ENCODE measurements at regions of chrX and their contacts with region 1.

Region 1: GRCh38 chrX:131704136-131704695 is 160.3 kb downstream of the OR13H1 start:
- DNase-seq: peak; percentile 69
- H3K4me3 ChIP-seq: peak overlapping the region; percentile 49 to 55 (median 51)
- H3K27ac ChIP-seq: peak overlapping the region; percentile 12
- H3K4me1 ChIP-seq: no peaks in the 10 kb centered on the region
- H3K27me3 ChIP-seq: no peaks in the 10 kb centered on the region
- CTCF ChIP-seq: peak; percentile 45 to 56

Region 2: GRCh38 chrX:131589032-131589431 is 115.2 kb before region 1 on chrX:
- CTCF ChIA-PET with region 1: no interaction called
- dilution Hi-C with region 1: no loop called
- in situ Hi-C with region 1: no loop called
- intact Hi-C with region 1: no loop called
- DNase-seq: no peak
- H3K4me3 ChIP-seq: no peak overlapping the region
- H3K27ac ChIP-seq: no peak overlapping the region
- H3K4me1 ChIP-seq: no peaks in the 10 kb centered on the region
- H3K27me3 ChIP-seq: peaks cover 3% of the 10 kb centered on the region
- CTCF ChIP-seq: no peak

Region 3: GRCh38 chrX:131728295-131729145 is 24.3 kb after region 1 on chrX:
- CTCF ChIA-PET with region 1: no interaction called
- dilution Hi-C with region 1: no loop called
- in situ Hi-C with region 1: no loop called
- intact Hi-C with region 1: loop called (anchors 1 kb)
- DNase-seq: peak; percentile 78
- H3K4me3 ChIP-seq: peak overlapping the region; percentile 33 to 49 (median 40)
- H3K27ac ChIP-seq: peak overlapping the region; percentile 36
- H3K4me1 ChIP-seq: no peaks in the 10 kb centered on the region
- H3K27me3 ChIP-seq: no peaks in the 10 kb centered on the region
- CTCF ChIP-seq: peak; percentile 33 to 60

Region 4: GRCh38 chrX:131746474-131746968 is 42.3 kb after region 1 on chrX:
- CTCF ChIA-PET with region 1: no interaction called
- dilution Hi-C with region 1: no loop called
- in situ Hi-C with region 1: no loop called
- intact Hi-C with region 1: loop called (anchors 1 kb)
- DNase-seq: peak; percentile 79
- H3K4me3 ChIP-seq: peak overlapping the region; percentile 54 to 66 (median 57)
- H3K27ac ChIP-seq: peak overlapping the region; percentile 57
- H3K4me1 ChIP-seq: no peaks in the 10 kb centered on the region
- H3K27me3 ChIP-seq: no peaks in the 10 kb centered on the region
- CTCF ChIP-seq: peak; percentile 22 to 45

Region 5: GRCh38 chrX:131778269-131779218 is 74.3 kb after region 1 on chrX:
- CTCF ChIA-PET with region 1: no interaction called
- dilution Hi-C with region 1: loop called (anchors 10 kb)
- in situ Hi-C with region 1: no loop called
- intact Hi-C with region 1: loop called (anchors 1 kb)
- DNase-seq: peak; percentile 70
- H3K4me3 ChIP-seq: peak overlapping the region; percentile 36 to 50 (median 49)
- H3K27ac ChIP-seq: peak overlapping the region; percentile 70
- H3K4me1 ChIP-seq: peaks cover 4% of the 10 kb centered on the region
- H3K27me3 ChIP-seq: no peaks in the 10 kb centered on the region
- CTCF ChIP-seq: peak; percentile 21 to 45

Region 6: DNA sequence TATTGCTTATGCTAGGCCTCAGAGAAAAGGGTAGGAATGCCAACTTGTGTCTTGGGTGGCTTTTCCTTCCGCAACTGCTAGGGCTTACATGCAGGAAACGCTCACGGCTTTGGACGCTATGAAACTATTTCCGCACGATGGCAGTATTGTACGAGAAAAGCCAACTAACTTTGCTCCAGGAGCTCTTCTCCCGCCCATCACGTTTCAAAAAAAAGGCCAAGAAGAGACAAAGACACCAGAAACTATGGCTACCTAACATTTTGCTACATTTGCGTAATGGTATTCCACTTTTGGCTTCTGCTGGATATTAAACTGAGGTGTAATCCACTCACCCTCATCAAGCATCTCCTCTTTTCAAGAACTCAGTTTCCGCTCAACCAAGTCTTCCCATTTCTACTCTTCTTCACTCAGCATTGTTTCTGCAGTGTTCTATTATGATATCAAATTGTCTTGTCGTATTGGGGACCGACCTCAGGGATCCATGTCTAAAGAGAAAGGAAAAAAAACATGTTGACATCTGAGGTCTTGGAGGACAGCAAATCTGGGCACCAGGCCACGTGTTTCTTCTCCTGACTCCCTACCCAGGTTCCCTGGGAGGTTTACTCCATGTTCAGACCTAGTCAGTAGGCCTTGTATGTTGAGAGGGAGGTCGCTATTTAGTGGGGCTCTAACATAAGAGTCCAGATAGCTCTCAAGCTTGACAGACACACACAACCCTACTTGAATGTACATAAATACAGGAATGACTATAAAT is 79.5 kb after region 1 on chrX:
- CTCF ChIA-PET with region 1: no interaction called
- dilution Hi-C with region 1: loop called (anchors 10 kb)
- in situ Hi-C with region 1: no loop called
- intact Hi-C with region 1: loop called (anchors 1 kb)
- DNase-seq: peak; percentile 86
- H3K4me3 ChIP-seq: peak overlapping the region in 1 of 3 experiments; percentile 35
- H3K27ac ChIP-seq: peak overlapping the region; percentile 38
- H3K4me1 ChIP-seq: peaks cover 4% of the 10 kb centered on the region
- H3K27me3 ChIP-seq: no peaks in the 10 kb centered on the region
- CTCF ChIP-seq: peak; percentile 50 to 56

Region 7: DNA sequence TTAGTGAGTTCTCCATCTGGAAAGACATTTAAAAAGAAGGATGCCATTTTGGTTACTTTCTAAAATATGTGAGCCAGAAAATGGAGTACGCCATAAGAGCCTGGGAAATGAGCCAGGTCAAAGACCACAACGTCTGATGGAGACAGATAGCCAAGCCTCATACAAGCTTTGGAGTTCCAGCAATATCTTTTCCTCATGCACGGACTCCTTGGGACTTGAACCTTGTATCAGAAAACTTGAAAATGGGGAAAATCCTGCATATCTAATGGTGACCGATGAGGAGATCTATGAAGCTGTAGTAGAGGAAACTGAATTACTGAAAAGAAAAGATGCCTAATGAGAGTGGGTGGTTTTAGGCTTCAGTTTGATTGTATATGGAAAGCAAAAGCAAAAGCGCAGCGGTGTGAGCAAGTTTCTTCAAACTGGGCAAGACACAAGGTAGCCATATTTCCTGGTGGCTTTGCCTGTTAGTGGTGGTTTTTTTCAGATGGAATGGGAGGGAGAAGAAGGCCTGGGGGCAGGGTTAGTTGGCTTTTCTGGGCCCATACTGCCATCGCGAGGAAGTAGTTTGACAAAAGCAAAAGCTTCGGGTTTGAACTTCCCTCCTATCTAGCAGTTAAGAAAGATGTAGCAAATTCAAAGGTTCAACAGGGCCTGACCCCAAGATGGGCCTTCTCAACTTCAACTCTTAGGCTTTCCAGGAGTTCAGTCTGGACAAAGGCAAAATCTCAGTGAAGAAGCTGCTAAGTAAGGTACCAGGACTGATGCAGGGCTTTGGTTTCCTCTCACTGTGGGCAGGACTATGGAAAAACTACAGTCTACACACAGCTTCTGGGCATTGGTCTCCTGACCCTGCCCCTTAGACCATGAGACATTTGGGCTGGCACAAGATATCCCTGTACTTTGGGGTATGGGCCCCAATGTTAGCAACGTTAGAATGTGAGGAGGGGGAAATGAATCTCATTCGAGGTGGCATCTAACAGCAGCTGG is 108.9 kb after region 1 on chrX:
- CTCF ChIA-PET with region 1: no interaction called
- dilution Hi-C with region 1: no loop called
- in situ Hi-C with region 1: loop called in 1 of 2 experiments (anchors 10 kb)
- intact Hi-C with region 1: loop called (anchors 1 kb)
- DNase-seq: peak; percentile 79
- H3K4me3 ChIP-seq: peak overlapping the region; percentile 24 to 43 (median 39)
- H3K27ac ChIP-seq: no peak overlapping the region
- H3K4me1 ChIP-seq: no peaks in the 10 kb centered on the region
- H3K27me3 ChIP-seq: no peaks in the 10 kb centered on the region
- CTCF ChIP-seq: peak; percentile 18 to 49

Measured in mammary epithelial cell (primary cell).